Endothelial cell of umbilical vein (primary cell): ENCODE measurements at regions of chr19 and their contacts with region 1.

Region 1: DNA sequence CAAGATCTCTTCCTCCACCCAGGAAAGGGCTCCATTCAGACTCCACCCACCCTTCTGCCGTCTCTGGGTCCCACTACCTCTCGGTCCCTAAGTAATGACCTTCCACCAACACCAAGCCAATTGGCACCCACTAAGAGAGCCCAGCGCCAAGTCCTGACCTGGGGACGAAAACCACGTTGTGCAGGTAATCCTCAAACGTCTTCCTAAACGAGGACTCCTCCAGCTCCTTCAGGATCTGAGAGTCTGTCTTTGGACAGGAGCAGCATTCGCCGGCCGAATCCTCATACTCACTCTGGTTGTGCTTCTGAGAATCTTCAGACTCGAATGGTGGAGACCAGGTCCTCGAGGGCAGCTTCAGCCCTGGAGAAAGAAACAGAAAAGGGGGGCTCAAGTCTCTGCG is 83.1 kb downstream of the ZNF557 start:
- DNase-seq: no peak
- H3K4me3 ChIP-seq: no peak overlapping the region
- H3K27ac ChIP-seq: no peak overlapping the region
- H3K4me1 ChIP-seq: peaks cover 3% of the 10 kb centered on the region
- H3K27me3 ChIP-seq: no peaks in the 10 kb centered on the region
- CTCF ChIP-seq: no peak
- POLR2A ChIP-seq: no peak

Region 2: GRCh38 chr19:7125221-7125620 is 27.3 kb before region 1 on chr19:
- CTCF ChIA-PET with region 1: no interaction called
- POLR2A ChIA-PET with region 1: no interaction called
- dilution Hi-C with region 1: no loop called
- intact Hi-C with region 1: no loop called
- DNase-seq: no peak
- H3K4me3 ChIP-seq: no peak overlapping the region
- H3K27ac ChIP-seq: no peak overlapping the region
- H3K4me1 ChIP-seq: peaks cover 12% of the 10 kb centered on the region
- H3K27me3 ChIP-seq: no peaks in the 10 kb centered on the region
- CTCF ChIP-seq: no peak
- POLR2A ChIP-seq: no peak

Region 3: GRCh38 chr19:7293795-7294570 is 141.4 kb after region 1 on chr19 and contains the start of gene INSR:
- CTCF ChIA-PET with region 1: no interaction called
- POLR2A ChIA-PET with region 1: no interaction called
- dilution Hi-C with region 1: no loop called
- intact Hi-C with region 1: loop called (anchors 1 kb)
- DNase-seq: peak; percentile 90
- H3K4me3 ChIP-seq: peak within 1 kb of the TSS; percentile 42 to 55 (median 50)
- H3K27ac ChIP-seq: peak within 1 kb of the TSS; percentile 14
- H3K4me1 ChIP-seq: peaks cover 3% of the 10 kb centered on the region
- H3K27me3 ChIP-seq: no peaks in the 10 kb centered on the region
- CTCF ChIP-seq: no peak
- POLR2A ChIP-seq: no peak
- total RNA-seq, gene INSR: 19.5 and 20.8 TPM in 2 replicates

Region 4: GRCh38 chr19:7326105-7326877 is 173.7 kb after region 1 on chr19:
- CTCF ChIA-PET with region 1: interaction called, 12 read pairs
- POLR2A ChIA-PET with region 1: no interaction called
- dilution Hi-C with region 1: no loop called
- intact Hi-C with region 1: no loop called
- DNase-seq: peak; percentile 22
- H3K4me3 ChIP-seq: no peak overlapping the region
- H3K27ac ChIP-seq: no peak overlapping the region
- H3K4me1 ChIP-seq: no peaks in the 10 kb centered on the region
- H3K27me3 ChIP-seq: no peaks in the 10 kb centered on the region
- CTCF ChIP-seq: peak; percentile 25 to 30
- POLR2A ChIP-seq: no peak

Region 5: DNA sequence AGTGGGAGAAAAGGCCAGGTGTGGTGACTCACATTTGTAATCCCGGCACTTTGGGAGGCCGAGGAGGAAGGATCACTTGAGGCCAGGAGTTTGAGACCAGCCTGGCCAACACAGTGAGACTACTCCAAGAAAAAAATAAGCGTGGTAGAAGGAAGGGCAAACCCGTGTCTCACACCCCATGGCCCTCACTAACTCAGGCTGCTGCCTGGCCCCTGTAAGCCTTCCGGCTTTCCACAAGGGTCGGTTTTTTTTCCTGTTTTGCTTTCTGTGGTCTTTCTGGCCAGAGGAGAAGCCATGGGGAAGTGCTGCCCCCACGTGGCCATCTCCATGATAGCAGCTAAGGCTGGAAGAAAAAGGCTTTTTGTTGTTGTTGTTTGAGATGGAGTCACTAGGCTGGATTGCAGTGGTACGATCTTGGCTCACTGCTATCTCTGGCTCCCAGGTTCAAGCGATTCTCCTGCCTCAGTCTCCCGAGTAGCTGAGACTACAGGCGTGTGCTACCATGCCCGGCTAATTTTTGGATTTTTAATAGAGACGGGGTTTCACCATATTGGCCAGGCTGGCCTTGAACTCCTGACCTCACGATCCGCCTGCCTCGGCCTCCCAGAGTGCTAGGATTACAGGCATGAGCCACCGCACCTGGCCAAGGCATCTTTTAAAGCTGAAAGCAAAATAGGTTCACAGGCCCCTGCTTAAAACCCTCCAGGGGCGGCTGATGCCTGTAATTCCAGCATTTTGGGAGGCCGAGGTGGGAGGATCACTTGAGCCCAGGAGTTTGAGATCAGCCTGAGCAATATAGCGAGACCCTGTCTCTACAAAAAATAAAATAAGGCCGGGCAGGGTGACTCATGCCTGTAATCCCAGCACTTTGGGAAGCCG is 188.6 kb after region 1 on chr19:
- CTCF ChIA-PET with region 1: interaction called, 42 read pairs
- POLR2A ChIA-PET with region 1: no interaction called
- dilution Hi-C with region 1: no loop called
- intact Hi-C with region 1: loop called (anchors 1 kb)
- DNase-seq: peak; percentile 86
- H3K4me3 ChIP-seq: no peak overlapping the region
- H3K27ac ChIP-seq: no peak overlapping the region
- H3K4me1 ChIP-seq: no peaks in the 10 kb centered on the region
- H3K27me3 ChIP-seq: no peaks in the 10 kb centered on the region
- CTCF ChIP-seq: peak; percentile 78 to 92
- POLR2A ChIP-seq: no peak

Region 6: GRCh38 chr19:7373862-7374261 is 221.3 kb after region 1 on chr19:
- CTCF ChIA-PET with region 1: no interaction called
- POLR2A ChIA-PET with region 1: no interaction called
- dilution Hi-C with region 1: no loop called
- intact Hi-C with region 1: no loop called
- DNase-seq: no peak
- H3K4me3 ChIP-seq: no peak overlapping the region
- H3K27ac ChIP-seq: no peak overlapping the region
- H3K4me1 ChIP-seq: no peaks in the 10 kb centered on the region
- H3K27me3 ChIP-seq: no peaks in the 10 kb centered on the region
- CTCF ChIP-seq: no peak
- POLR2A ChIP-seq: no peak